ENCODE measurements at regions of chr19 and their contacts with region 1.

Region 1: GRCh38 chr19:36198119-36198518 is 16.3 kb downstream of the ZNF565 start:
- DNase-seq: no peak
- ATAC-seq: no peak
- H3K4me3 ChIP-seq: no peak overlapping the region
- H3K27ac ChIP-seq: no peak overlapping the region
- H3K4me1 ChIP-seq: no peaks in the 10 kb centered on the region
- H3K27me3 ChIP-seq: no peaks in the 10 kb centered on the region
- CTCF ChIP-seq: no peak

Region 2: GRCh38 chr19:36483653-36484052 is 285.5 kb after region 1 on chr19:
- intact Hi-C with region 1: loop called in 1 of 10 experiments (anchors 10 kb)
- DNase-seq: no peak
- ATAC-seq: no peak
- H3K4me3 ChIP-seq: no peak overlapping the region
- H3K27ac ChIP-seq: no peak overlapping the region
- H3K4me1 ChIP-seq: peaks cover 3 to 15% (median 8%) of the 10 kb centered on the region in 9 donors
- H3K27me3 ChIP-seq: no peaks in the 10 kb centered on the region
- CTCF ChIP-seq: no peak

Measured in heart right ventricle (tissue), 16 donors.